ENCODE measurements at regions of chr17 and their contacts with region 1.

Region 1: GRCh38 chr17:38485146-38485468 is 56.8 kb downstream of the ARHGAP23 start:
- DNase-seq: no peak
- ATAC-seq: no peak
- H3K4me3 ChIP-seq: no peak overlapping the region
- H3K4me1 ChIP-seq: no peaks in the 10 kb centered on the region
- CTCF ChIP-seq: no peak

Region 2: DNA sequence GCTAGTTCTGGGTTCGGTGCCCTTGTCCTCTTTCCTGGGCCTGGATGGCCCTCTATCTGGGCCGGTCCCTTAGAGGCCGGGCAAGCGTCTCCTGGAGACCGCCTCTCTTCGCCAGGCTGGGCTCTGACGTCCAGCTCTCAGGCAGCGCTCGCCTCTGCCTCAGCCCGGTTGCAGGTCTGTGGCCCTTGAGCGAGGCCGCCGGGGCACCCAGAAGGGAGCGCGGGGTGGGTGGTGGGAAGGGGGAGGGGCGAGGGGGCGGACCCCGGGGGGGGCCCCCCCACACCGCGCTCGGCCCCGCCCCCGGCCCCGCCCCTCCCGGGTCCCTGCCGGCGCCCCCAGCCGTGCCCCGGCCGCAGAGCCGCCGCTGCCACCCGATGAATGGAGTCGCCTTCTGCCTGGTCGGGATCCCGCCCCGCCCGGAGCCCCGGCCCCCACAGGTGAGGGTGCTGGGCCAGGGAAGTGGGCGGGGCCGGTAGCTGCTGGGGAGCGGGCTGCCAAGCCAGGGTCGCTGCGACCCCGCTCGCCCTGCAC is 56.9 kb before region 1 on chr17 and contains the start of gene ARHGAP23:
- intact Hi-C with region 1: loop called in 1 of 2 experiments (anchors 10 kb)
- DNase-seq: peak in 2 of 3 donors; percentile 25 to 58
- ATAC-seq: peak; percentile 66
- H3K4me3 ChIP-seq: peak within 1 kb of the TSS; percentile 30
- H3K4me1 ChIP-seq: peaks cover 11% of the 10 kb centered on the region
- CTCF ChIP-seq: no peak
- total RNA-seq, gene ARHGAP23: 6.1 to 44.6 (median 12.6) TPM

Region 3: GRCh38 chr17:38617011-38617867 is 132.1 kb after region 1 on chr17:
- intact Hi-C with region 1: no loop called
- DNase-seq: peak in 1 of 3 donors; percentile 58
- ATAC-seq: peak; percentile 80
- H3K4me3 ChIP-seq: no peak overlapping the region
- H3K4me1 ChIP-seq: peaks cover 9% of the 10 kb centered on the region
- CTCF ChIP-seq: no peak

Measured in mucosa of descending colon (tissue), 3 donors.